ENCODE measurements at regions of chr3 and their contacts with region 1.

Region 1: GRCh38 chr3:142993958-142994442 is 7.4 kb upstream of the U2SURP start:
- DNase-seq: peak; percentile 65 to 71
- ATAC-seq: peak in 3 of 4 donors; percentile 44 to 85 (median 64)
- H3K4me3 ChIP-seq: no peak overlapping the region
- H3K27ac ChIP-seq: no peak overlapping the region
- H3K4me1 ChIP-seq: no peaks in the 10 kb centered on the region
- H3K27me3 ChIP-seq: no peaks in the 10 kb centered on the region
- CTCF ChIP-seq: peak; percentile 71

Region 2: DNA sequence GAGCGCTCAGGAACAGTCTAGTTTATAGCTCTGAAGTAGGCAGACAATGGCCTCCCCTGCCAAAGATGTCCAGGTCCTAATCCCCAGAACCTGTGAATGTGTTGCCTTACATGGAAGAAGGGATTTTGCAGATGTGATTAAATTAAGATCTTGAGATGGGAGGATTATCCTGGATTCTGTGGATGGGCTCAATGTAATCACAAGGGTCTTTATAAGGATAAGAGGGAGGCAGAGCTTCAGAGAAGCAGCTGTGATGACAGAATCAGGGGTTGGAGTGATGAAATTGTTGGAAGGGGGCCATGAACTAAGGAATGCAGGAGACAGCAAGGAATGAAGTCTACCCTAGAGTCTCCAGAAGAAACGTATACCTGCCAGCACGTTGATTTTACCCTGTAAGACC is 754.6 kb before region 1 on chr3:
- intact Hi-C with region 1: no loop called
- DNase-seq: no peak
- ATAC-seq: no peak
- H3K4me3 ChIP-seq: no peak overlapping the region
- H3K27ac ChIP-seq: no peak overlapping the region
- H3K4me1 ChIP-seq: no peaks in the 10 kb centered on the region
- H3K27me3 ChIP-seq: no peaks in the 10 kb centered on the region
- CTCF ChIP-seq: no peak

Region 3: GRCh38 chr3:142595951-142596725 is 397.9 kb before region 1 on chr3 and contains the start of gene PLS1:
- intact Hi-C with region 1: loop called in 1 of 2 experiments (anchors 5 kb)
- DNase-seq: peak; percentile 80 to 90
- ATAC-seq: peak; percentile 95 to 99 (median 98)
- H3K4me3 ChIP-seq: peak within 1 kb of the TSS; percentile 83
- H3K27ac ChIP-seq: peak within 1 kb of the TSS; percentile 39
- H3K4me1 ChIP-seq: peaks cover 3% of the 10 kb centered on the region
- H3K27me3 ChIP-seq: no peaks in the 10 kb centered on the region
- CTCF ChIP-seq: no peak
- total RNA-seq, gene PLS1: 0.24 to 0.58 (median 0.38) TPM

Region 4: DNA sequence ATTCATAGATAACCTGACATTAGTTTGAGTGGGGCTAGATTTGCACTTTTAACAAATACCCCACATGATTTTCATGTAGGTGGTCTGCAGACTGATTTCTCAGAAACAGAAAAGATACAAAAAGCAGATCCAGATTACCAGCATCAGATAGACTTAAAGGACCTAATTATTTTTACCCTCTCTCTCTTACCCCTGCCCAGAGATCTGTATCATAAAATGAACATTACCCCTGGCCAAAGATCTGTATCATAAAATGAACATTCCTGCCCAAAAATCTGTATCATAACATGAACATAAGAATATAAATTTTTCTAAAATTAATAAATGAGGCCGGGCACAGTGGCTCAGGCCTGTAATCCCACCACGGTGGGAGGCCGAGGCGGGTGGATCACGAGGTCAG is 284.8 kb before region 1 on chr3:
- intact Hi-C with region 1: no loop called
- DNase-seq: no peak
- ATAC-seq: no peak
- H3K4me3 ChIP-seq: no peak overlapping the region
- H3K27ac ChIP-seq: no peak overlapping the region
- H3K4me1 ChIP-seq: no peaks in the 10 kb centered on the region
- H3K27me3 ChIP-seq: no peaks in the 10 kb centered on the region
- CTCF ChIP-seq: no peak

Region 5: GRCh38 chr3:142828703-142829305 is 165.2 kb before region 1 on chr3:
- intact Hi-C with region 1: loop called (anchors 2 to 5 kb)
- DNase-seq: peak; percentile 81 to 82
- ATAC-seq: peak; percentile 86 to 97 (median 92)
- H3K4me3 ChIP-seq: no peak overlapping the region
- H3K27ac ChIP-seq: no peak overlapping the region
- H3K4me1 ChIP-seq: no peaks in the 10 kb centered on the region
- H3K27me3 ChIP-seq: no peaks in the 10 kb centered on the region
- CTCF ChIP-seq: peak; percentile 77

Region 6: DNA sequence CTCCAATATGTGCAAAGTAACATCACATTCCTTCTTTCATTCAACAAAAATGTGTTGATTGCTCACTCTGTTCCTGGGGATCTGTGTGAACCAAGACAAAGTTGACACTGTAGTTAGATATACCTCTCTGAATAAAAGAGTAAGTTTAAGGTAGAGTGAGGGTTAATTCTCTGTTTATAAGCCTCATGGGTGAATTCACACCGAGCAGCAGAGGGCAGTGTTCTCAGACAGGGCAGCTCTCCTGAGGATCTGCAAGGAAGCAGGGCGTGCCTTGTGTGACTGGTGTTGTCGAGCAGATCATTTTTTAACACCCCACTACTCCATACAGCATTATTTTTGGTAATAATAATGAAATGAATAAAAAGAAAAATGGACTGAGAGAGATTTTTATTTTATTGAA is 64.9 kb before region 1 on chr3:
- intact Hi-C with region 1: loop called (anchors 2 to 5 kb)
- DNase-seq: peak; percentile 36 to 76
- ATAC-seq: peak; percentile 83 to 98 (median 90)
- H3K4me3 ChIP-seq: no peak overlapping the region
- H3K27ac ChIP-seq: no peak overlapping the region
- H3K4me1 ChIP-seq: no peaks in the 10 kb centered on the region
- H3K27me3 ChIP-seq: peaks cover 0 to 4% (median 0%) of the 10 kb centered on the region in 3 donors
- CTCF ChIP-seq: peak; percentile 71

Region 7: DNA sequence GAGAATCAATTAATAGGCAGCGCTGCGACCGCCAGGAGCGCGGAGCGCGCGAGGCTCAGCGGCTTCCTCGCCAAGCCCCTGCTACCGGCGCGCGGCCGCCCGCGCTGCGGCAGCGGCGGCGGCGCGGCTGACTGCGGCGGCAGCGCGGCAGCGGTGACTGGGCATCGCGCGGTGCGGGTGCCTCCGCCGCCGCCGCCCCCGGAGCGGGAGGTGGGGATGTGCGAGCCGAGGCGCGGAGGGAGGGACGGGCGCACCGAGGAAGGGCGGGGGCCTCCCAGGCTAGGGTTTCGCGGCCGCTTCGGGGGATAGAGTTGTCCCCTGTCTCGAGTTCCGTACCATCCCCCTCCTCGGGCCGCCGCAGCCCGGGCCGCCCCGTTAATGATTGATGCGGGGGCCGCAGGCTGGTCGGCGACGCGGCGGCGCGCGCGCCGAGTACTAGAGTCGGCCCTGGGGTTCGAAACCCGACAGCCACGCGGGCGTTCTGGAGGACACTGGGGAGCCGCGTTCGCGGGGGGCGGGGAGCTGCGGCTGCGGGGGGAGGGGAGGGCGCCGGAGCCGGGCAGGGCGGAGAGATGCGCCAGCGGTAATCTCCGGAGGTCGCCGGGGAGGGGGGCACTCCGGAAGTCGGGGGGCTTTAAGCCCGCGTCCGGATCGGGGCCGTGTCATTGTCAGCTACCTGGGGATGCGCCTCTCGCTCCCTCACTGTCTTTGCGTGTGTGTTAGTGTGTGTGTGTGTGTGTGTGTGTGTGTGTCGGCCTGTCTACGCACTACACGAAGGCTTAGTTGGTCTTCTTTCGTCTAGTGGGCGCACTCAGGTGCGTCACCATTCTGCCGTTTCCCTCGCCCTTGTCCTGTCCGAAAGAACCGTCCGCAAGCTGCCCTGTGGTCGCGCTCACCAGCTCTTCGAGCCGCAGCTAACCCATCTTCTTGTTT is 30.2 kb before region 1 on chr3 and contains the start of gene PAQR9:
- intact Hi-C with region 1: no loop called
- DNase-seq: peak; percentile 35 to 64
- ATAC-seq: peak; percentile 57 to 70 (median 63)
- H3K4me3 ChIP-seq: peak within 1 kb of the TSS; percentile 85
- H3K27ac ChIP-seq: peak within 1 kb of the TSS; percentile 53
- H3K4me1 ChIP-seq: no peaks in the 10 kb centered on the region
- H3K27me3 ChIP-seq: peaks cover 0 to 12% (median 2%) of the 10 kb centered on the region in 3 donors
- CTCF ChIP-seq: no peak
- total RNA-seq, gene PAQR9: 0.53 to 2.6 (median 2.3) TPM

Measured in psoas muscle (tissue), 8 donors.